Transverse colon (tissue), 4 donors: ENCODE measurements at regions of chr18 and their contacts with region 1.

Region 1: DNA sequence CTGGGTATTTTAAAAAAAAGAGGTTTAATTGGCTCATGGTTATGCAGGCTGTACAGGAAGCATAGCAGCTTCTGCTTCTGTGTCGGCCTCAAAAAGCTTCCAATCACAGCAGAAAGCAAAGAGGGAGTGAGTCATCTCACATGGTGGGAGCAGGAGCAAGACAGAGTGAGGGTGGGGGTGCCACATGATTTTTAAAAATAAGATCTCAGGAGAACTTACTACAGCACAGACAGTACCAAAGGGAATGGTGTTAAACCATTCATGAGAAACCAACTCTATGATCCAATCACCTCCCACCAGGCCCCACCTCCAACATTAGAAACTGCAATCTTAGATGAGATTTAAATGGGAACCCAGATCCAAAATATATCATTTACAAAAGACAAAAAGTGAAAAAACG is 14.6 kb downstream of the ZNF519 start:
- DNase-seq: no peak
- H3K4me3 ChIP-seq: no peak overlapping the region
- H3K27ac ChIP-seq: no peak overlapping the region
- H3K4me1 ChIP-seq: no peaks in the 10 kb centered on the region
- H3K27me3 ChIP-seq: no peaks in the 10 kb centered on the region
- CTCF ChIP-seq: no peak
- EP300 ChIP-seq: no peak
- POLR2A ChIP-seq: no peak

Region 2: GRCh38 chr18:13831864-13832508 is 285.6 kb before region 1 on chr18:
- in situ Hi-C with region 1: loop called in 1 of 4 experiments (anchors 25 kb)
- intact Hi-C with region 1: no loop called
- DNase-seq: no peak
- H3K4me3 ChIP-seq: no peak overlapping the region
- H3K27ac ChIP-seq: no peak overlapping the region
- H3K4me1 ChIP-seq: no peaks in the 10 kb centered on the region
- H3K27me3 ChIP-seq: peaks cover 37% of the 10 kb centered on the region
- CTCF ChIP-seq: no peak
- EP300 ChIP-seq: no peak
- POLR2A ChIP-seq: no peak

Region 3: GRCh38 chr18:14043903-14044302 is 73.7 kb before region 1 on chr18:
- in situ Hi-C with region 1: no loop called
- intact Hi-C with region 1: no loop called
- DNase-seq: no peak
- H3K4me3 ChIP-seq: no peak overlapping the region
- H3K27ac ChIP-seq: no peak overlapping the region
- H3K4me1 ChIP-seq: no peaks in the 10 kb centered on the region
- H3K27me3 ChIP-seq: no peaks in the 10 kb centered on the region
- CTCF ChIP-seq: no peak
- EP300 ChIP-seq: no peak
- POLR2A ChIP-seq: no peak

Region 4: GRCh38 chr18:14144628-14144895 is 27.0 kb after region 1 on chr18:
- in situ Hi-C with region 1: no loop called
- intact Hi-C with region 1: no loop called
- DNase-seq: no peak
- H3K4me3 ChIP-seq: no peak overlapping the region
- H3K27ac ChIP-seq: no peak overlapping the region
- H3K4me1 ChIP-seq: no peaks in the 10 kb centered on the region
- H3K27me3 ChIP-seq: no peaks in the 10 kb centered on the region
- CTCF ChIP-seq: no peak
- EP300 ChIP-seq: no peak
- POLR2A ChIP-seq: no peak